ENCODE measurements at regions of chr1 and their contacts with region 1.

Region 1: GRCh38 chr1:67149179-67149770 is 14.5 kb upstream of the C1orf141 start:
- DNase-seq: peak; percentile 50
- ATAC-seq: peak; percentile 90
- H3K4me3 Mint-ChIP-seq: no peak overlapping the region
- H3K27ac Mint-ChIP-seq: peak overlapping the region; percentile 32
- H3K4me1 Mint-ChIP-seq: peaks cover 37% of the 10 kb centered on the region
- H3K27me3 Mint-ChIP-seq: peaks cover 25% of the 10 kb centered on the region

Region 2: GRCh38 chr1:66968574-66968973 is 180.7 kb before region 1 on chr1:
- POLR2A ChIA-PET with region 1: no interaction called
- DNase-seq: no peak
- ATAC-seq: no peak
- H3K4me3 Mint-ChIP-seq: no peak overlapping the region
- H3K27ac Mint-ChIP-seq: no peak overlapping the region
- H3K4me1 Mint-ChIP-seq: peaks cover 10% of the 10 kb centered on the region
- H3K27me3 Mint-ChIP-seq: no peaks in the 10 kb centered on the region

Region 3: DNA sequence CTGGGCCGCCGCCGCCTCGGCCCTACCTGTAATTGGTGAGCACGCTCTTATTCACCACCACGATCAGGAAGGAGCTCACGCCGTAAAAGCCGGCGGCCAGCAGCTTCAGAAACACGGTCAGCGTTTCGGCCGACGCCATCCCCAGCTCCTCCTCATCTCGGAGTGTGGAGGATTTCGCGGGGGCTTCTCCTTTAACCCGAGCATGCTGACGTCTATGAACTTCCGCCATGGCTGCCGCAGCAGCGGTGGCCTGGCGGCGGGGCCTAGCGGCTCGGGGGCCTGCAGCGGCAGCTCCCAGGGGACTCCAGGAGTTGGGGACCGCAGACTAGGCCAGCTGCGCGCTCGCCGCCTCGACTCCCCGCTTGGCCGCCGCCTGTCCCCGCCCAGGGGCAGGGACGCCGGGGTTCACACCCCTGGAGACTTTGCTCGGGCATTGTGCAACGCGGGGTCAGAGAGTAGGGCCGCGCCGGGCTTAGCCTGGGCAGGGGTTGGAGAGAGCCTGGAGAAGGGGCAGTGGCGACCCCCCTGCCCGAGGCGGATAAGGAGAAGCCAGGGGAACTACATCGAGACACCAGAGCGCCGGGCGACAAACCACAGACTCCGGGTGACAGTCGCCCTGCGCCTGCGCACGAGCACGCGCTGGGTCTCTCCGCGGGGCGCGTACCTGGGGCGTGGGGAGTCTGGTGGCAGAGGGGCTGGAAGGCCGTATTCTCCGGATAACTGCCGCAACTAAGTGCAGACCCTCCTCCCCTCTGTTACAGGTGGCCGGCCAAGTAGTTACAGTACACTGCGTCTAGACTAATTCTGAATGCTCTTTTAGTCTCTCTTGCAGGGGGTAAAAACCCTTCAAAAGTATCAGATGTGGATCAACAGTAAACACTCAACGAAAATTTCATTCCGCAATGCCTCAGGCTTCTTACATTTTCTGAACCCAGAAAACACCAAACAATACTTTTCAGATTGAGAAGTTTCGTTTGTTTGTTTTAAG is 95.2 kb before region 1 on chr1 and contains the start of gene SLC35D1:
- POLR2A ChIA-PET with region 1: interaction called, 11 read pairs
- DNase-seq: peak; percentile 80
- ATAC-seq: peak; percentile 75
- H3K4me3 Mint-ChIP-seq: peak within 1 kb of the TSS; percentile 94
- H3K27ac Mint-ChIP-seq: peak within 1 kb of the TSS; percentile 92
- H3K4me1 Mint-ChIP-seq: peaks cover 23% of the 10 kb centered on the region
- H3K27me3 Mint-ChIP-seq: peaks cover 7% of the 10 kb centered on the region
- total RNA-seq, gene SLC35D1: 10.9 to 11.3 TPM

Region 4: DNA sequence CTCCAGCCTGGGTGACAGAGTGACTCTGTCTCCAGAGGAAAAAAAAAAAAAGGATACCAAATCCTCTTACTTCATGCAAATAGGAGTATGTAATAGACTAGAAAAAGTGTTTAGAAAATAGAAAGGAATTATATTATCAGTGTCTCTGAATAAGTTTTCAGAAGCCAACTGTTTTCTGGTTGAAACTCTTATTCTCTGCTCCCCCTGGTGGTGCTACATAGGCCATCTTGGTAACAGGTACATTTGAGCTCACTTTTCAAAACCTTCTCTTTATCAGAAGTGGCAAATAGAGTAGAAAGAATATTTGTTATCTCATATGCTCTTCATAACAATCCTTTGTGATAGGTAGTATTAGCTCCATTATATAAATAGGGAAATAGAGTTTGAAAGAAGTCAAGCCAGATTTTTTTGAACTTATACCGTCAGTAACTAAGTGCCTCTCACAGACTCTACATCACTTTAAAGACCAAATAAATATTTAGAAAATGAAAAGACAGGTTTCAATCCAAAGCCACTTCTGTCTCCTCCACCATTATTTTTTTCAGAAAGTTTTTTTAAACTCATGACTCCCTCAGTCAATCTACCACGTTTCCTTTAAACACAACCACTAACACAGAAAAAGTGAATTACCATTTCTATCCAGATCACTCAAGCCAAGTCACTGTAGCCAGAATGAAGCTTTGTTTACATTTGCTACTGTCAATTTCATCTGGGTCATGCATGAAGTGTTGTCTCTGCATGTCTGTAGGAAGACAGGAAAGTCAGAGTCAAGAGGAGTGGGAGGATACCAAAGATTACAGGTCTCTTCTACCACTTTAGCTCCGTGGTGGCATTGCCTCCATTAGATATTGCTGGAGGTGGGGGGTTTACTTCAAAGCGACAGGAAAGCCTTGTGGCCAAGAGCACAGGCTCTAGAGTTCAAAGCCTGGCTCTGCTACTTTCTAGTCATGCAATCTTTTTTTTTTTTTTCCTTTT is 62.6 kb after region 1 on chr1:
- POLR2A ChIA-PET with region 1: interaction called, 12 read pairs
- DNase-seq: no peak
- ATAC-seq: peak; percentile 84
- H3K4me3 Mint-ChIP-seq: peak overlapping the region; percentile 59
- H3K27ac Mint-ChIP-seq: peak overlapping the region; percentile 80
- H3K4me1 Mint-ChIP-seq: peaks cover 30% of the 10 kb centered on the region
- H3K27me3 Mint-ChIP-seq: peaks cover 5% of the 10 kb centered on the region

Measured in activated naive CD8-positive, alpha-beta T cell treated with anti-CD3 and anti-CD28 coated beads, Interleukin-2, amount 10 ng/mL, durations not matched to agents 7 days and 5 days (primary cell).